GM18951 (cell line): ENCODE measurements at regions of chr16 and their contacts with region 1.

Region 1: DNA sequence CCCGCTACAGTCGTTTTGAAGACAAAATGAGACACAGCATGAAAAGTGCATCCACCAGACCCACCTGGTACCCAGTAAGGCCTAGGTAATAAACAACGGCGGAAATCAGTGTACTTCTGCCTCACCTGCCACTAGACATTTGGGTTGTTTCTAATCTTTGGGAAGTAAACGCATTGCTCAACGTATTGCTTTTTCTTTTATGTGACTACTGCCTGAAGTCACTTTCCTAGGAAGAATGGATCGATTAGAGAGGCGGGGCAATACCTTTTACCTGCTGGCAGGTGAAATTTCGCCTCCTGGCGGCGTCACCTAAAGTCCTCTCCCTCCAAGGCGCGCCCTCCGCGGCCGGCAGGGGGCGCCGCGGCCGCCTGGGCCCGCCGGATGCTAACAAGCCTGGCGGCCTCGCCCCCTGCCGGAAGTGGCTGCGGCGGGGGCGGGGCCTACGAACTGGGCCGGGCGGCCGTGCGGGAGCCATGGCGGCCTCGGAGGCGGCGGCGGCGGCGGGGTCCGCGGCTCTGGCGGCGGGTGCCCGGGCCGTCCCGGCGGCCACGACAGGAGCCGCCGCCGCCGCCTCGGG is at the start of gene ATMIN:
- POLR2A ChIP-seq: peak; percentile 77

Region 2: DNA sequence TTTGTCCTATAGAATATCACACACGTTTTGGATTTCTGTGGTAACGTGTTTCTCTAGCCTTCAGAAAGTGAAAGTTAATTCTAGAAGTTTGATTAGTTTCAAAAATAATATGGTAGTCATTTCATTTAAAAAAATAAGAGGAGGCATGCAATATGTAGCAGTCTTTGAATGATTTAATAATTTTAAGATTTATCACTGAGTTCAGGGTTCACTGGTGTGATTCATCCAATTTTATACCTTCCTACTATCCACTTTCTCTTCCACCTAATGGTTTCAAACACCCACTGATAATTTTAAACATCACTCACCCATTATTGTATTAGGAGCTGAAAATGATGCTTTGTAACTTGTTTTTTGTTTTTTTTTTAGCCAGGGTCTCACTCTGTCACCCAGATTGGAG is 71.1 kb before region 1 on chr16:
- in situ Hi-C with region 1: no loop called
- POLR2A ChIP-seq: no peak

Region 3: GRCh38 chr16:81737885-81738786 is 702.6 kb after region 1 on chr16:
- in situ Hi-C with region 1: loop called (anchors 25 kb)
- POLR2A ChIP-seq: no peak